Panc1 (cell line): ENCODE measurements at regions of chrX and their contacts with region 1.

Region 1: DNA sequence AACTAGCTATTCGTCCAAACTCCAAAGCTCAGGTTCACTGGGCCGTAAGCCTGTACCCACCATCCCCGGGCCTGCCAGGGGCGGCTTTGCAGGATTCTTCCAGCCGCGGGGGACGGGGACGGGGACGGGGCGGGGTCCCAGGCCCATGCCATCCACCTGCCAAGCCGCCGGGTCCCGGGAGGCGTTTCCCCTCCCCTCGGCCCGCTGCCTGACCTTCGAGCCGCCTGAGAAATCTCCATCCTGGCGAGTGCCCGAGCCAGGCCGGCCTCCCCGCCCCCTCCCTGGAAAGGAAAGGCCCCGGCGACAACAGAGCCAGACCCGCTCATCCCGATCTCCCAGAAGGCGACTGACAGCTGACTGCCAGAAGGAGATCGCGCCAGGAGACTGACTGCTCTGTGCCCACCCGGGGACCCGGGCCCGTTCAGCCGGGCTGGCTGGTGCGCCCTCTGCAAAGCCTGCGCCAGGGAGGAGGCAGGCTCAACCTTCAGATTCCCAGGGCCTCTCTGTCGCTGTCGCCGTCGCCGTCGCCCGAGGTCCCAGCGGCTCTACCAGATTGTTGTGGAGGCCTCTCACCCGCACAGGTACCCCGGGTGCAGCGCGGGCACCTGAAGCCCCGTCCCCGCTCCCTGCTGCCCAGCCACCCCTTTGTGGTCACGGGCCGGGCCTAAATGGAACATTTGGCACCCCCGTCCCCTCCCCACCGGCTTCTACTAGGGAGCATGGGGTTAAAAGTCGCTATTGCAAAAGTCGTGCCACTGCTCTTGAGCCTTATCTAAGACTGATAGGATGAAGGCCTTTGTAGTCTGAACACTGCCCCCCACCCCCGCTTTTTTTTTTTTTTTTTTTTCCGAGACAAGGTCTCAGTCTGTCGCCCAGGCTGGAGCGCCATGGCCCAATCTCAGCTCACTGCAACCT is at the start of gene RGN:
- DNase-seq: no peak
- ATAC-seq: peak; percentile 74
- H3K4me3 ChIP-seq: peak within 1 kb of the TSS; percentile 32 to 51
- H3K27ac ChIP-seq: no peak within 1 kb of the TSS
- H3K4me1 ChIP-seq: no peaks in the 10 kb centered on the region
- H3K27me3 ChIP-seq: no peaks in the 10 kb centered on the region
- CTCF ChIP-seq: no peak
- total RNA-seq, gene RGN: 3.4 TPM

Region 2: GRCh38 chrX:47030339-47030738 is 48.0 kb before region 1 on chrX:
- CTCF ChIA-PET with region 1: interaction called, 10 read pairs
- POLR2A ChIA-PET with region 1: no interaction called
- in situ Hi-C with region 1: no loop called
- intact Hi-C with region 1: no loop called
- DNase-seq: peak; percentile 33
- ATAC-seq: peak; percentile 80
- H3K4me3 ChIP-seq: no peak overlapping the region
- H3K27ac ChIP-seq: no peak overlapping the region
- H3K4me1 ChIP-seq: no peaks in the 10 kb centered on the region
- H3K27me3 ChIP-seq: no peaks in the 10 kb centered on the region
- CTCF ChIP-seq: peak; percentile 67; the same call in 1 of the 2 replicates

Region 3: DNA sequence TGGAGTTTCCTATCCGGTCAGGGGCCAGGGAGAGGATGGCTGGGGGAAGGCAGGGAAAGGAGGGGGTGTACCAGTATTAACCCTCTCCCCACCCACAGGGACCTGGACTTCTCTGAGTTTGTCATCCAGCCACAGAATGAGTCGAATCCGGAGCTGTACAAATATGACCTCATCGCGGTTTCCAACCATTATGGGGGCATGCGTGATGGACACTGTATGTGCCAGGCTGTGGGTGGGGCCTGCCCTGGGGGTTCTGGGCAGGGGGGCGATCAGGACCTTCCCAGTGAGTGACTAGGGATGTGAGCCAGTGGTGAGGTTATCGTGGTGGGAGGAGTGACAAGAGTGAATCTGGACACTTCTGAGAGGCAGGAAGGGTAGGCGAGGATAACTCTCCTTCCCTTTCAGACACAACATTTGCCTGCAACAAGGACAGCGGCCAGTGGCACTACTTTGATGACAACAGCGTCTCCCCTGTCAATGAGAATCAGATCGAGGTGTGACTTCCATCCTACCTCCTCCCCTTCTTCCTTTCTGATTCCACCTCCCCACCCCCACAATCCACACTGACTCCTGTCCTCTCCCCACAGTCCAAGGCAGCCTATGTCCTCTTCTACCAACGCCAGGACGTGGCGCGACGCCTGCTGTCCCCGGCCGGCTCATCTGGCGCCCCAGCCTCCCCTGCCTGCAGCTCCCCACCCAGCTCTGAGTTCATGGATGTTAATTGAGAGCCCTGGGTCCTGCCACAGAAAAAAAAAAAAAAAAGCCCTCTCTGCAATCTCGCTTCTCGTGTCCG is 169.0 kb after region 1 on chrX:
- CTCF ChIA-PET with region 1: no interaction called
- POLR2A ChIA-PET with region 1: no interaction called
- in situ Hi-C with region 1: no loop called
- intact Hi-C with region 1: no loop called
- DNase-seq: no peak
- ATAC-seq: no peak
- H3K4me3 ChIP-seq: no peak overlapping the region
- H3K27ac ChIP-seq: no peak overlapping the region
- H3K4me1 ChIP-seq: no peaks in the 10 kb centered on the region
- H3K27me3 ChIP-seq: no peaks in the 10 kb centered on the region
- CTCF ChIP-seq: no peak

Region 4: GRCh38 chrX:47283015-47283771 is 204.8 kb after region 1 on chrX:
- CTCF ChIA-PET with region 1: no interaction called
- POLR2A ChIA-PET with region 1: no interaction called
- in situ Hi-C with region 1: no loop called
- intact Hi-C with region 1: no loop called
- DNase-seq: no peak
- ATAC-seq: no peak
- H3K4me3 ChIP-seq: no peak overlapping the region
- H3K27ac ChIP-seq: no peak overlapping the region
- H3K4me1 ChIP-seq: no peaks in the 10 kb centered on the region
- H3K27me3 ChIP-seq: no peaks in the 10 kb centered on the region
- CTCF ChIP-seq: no peak